Head of caudate nucleus (tissue), 42 donors: ENCODE measurements at regions of chr5 and their contacts with region 1.

Region 1: DNA sequence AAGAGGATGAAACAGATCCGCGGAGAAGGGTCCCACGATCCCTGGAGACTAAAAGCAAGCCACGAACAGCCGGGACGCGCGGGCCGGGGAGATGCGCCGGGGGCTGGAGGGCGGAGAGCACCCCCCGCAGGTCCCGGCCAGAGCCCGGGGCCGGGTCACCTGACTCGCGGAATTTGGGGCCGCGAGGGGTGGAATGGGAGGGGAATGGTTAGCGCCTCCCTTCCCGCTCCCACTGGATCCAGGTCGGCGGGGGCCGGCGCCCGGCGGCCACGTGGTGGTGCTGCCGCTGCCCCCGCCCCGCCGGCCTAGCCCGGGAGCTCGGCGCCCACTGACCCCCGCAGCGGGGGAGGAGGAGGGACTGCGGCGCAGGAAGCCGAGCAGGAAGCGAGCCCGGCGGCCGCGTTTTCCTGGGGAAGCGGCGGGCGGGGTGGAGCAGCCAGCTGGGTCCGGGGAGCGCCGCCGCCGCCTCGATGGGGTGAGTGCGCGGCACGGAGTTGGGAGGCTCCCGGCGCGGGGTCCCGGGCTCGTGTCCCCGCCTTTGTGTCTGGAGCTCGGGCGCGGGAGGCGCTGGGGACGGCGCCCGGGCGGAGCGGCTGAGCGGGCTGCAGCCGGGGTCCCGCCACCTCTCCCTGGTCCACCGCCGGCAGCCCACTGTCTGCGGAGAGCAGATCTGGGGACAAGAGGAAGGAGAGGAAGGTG is at the start of gene RAI14:
- DNase-seq: peak; percentile 20 to 91 (median 78)

Region 2: GRCh38 chr5:34503379-34504253 is 152.5 kb before region 1 on chr5:
- intact Hi-C with region 1: loop called (anchors 10 kb)
- DNase-seq: peak in 40 of 42 donors; percentile 33 to 88 (median 64)

Region 3: DNA sequence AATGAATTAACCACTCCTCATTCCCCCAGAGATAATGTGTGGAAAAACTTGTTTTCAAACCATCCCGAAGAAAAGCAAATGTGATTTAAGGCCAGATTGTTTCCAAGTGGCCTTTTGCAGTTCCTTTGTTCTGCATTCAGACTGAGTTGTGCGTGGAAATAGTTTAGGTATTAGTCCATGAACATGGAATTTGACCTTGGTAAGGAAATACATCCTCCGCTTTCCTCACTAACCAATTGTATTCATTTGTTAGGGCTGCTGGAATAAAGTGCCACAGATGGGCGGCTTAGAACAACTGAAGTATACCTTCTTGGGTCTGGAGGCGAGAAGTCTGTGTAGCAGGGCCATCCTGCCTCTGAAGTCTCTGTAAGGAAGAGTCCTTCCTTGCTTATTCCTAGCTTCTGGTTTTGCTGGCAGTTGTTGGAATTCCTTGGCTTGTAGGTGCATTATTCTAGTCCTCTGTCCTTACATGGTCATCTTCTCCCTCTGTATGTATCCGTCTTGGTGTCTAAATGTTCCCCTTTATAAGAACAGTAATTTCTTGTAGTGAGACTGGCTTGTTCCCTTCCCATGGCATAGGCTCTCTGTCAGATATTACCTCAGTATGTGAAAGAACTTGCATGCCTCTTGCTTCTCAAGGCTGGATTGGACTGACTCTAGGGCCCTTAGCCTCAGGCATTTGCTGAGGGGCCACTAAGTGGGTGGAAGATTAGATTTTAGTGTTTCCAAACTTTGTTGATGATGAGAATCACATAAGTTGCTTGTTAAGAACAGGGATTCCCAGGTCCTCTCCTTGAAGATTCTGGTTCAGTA is 53.9 kb after region 1 on chr5:
- intact Hi-C with region 1: no loop called
- DNase-seq: no peak

Region 4: GRCh38 chr5:34756781-34757624 is 100.9 kb after region 1 on chr5:
- intact Hi-C with region 1: no loop called
- DNase-seq: no peak